ENCODE measurements at regions of chr10 and their contacts with region 1.

Region 1: DNA sequence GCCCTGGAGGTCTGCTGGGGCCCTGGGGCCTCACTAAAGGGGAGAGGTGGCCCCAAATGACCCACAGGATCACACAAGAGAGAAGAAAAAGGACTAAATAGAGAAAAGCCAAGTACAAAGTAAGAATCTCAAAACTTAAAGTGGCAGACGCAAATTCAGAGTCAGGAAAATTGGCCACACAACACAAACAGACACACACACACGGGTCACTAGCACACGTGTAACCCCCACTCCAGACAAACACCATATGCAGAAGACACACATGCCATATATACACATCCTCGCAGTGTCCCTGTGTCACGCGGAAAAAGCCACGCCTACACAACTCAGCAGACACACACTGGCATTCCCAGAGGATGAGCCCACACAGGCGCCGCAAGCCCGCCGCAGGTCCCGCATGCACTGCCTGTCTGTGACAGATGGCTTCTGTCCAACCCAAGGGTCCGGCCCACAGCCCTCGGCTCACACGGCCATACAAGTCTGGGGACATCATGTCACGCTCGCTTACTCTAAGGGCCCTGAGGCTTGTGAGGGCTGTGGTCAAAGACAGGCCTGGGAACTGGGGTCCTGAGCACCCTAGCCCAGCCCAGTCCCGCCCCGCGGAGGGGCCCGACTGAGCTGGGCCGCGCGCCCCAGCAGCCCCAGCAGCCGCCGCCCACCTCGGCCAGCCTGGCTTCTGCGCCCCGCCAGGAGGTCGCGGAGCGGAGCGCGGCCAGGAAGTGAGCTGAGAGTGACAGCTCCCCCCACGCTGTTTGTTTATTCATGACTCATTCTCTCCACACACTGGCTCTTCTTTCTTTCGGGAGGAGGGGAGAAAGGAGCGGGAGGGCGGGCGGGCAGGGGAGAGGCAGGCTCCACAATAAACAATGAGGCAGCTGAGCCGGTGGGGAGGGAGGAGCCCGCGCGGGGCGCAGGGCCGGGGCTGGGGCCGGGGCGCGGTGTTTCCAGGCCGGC is 95.5 kb upstream of the ZMIZ1 start:
- DNase-seq: peak; percentile 84
- ATAC-seq: peak; percentile 64
- H3K4me3 ChIP-seq: peak overlapping the region; percentile 42 to 61
- H3K27ac ChIP-seq: peak overlapping the region; percentile 96
- H3K4me1 ChIP-seq: peaks cover 30 to 48% of the 10 kb centered on the region in 2 experiments
- H3K27me3 ChIP-seq: no peaks in the 10 kb centered on the region
- CTCF ChIP-seq: no peak
- POLR2A ChIP-seq: no peak
- RAD21 ChIP-seq: no peak

Region 2: GRCh38 chr10:79149662-79150443 is 176.6 kb after region 1 on chr10:
- CTCF ChIA-PET with region 1: no interaction called
- POLR2A ChIA-PET with region 1: no interaction called
- RAD21 ChIA-PET with region 1: no interaction called
- intact Hi-C with region 1: loop called (anchors 5 kb)
- DNase-seq: peak; percentile 48
- ATAC-seq: peak; percentile 74
- H3K4me3 ChIP-seq: peak overlapping the region in 1 of 2 experiments; percentile 32; a peak in 2 of 4 replicates
- H3K27ac ChIP-seq: peak overlapping the region; percentile 94
- H3K4me1 ChIP-seq: peaks cover 54 to 93% of the 10 kb centered on the region in 2 experiments
- H3K27me3 ChIP-seq: no peaks in the 10 kb centered on the region
- CTCF ChIP-seq: no peak
- POLR2A ChIP-seq: no peak
- RAD21 ChIP-seq: no peak

Region 3: GRCh38 chr10:79331709-79332108 is 358.5 kb after region 1 on chr10:
- CTCF ChIA-PET with region 1: no interaction called
- POLR2A ChIA-PET with region 1: no interaction called
- RAD21 ChIA-PET with region 1: no interaction called
- intact Hi-C with region 1: no loop called
- DNase-seq: no peak
- ATAC-seq: no peak
- H3K4me3 ChIP-seq: no peak overlapping the region
- H3K27ac ChIP-seq: no peak overlapping the region
- H3K4me1 ChIP-seq: peaks cover 0 to 40% of the 10 kb centered on the region in 2 experiments; a peak in 2 of 4 replicates
- H3K27me3 ChIP-seq: no peaks in the 10 kb centered on the region
- CTCF ChIP-seq: no peak
- POLR2A ChIP-seq: no peak
- RAD21 ChIP-seq: no peak